ENCODE measurements at regions of chr2 and their contacts with region 1.

Region 1: DNA sequence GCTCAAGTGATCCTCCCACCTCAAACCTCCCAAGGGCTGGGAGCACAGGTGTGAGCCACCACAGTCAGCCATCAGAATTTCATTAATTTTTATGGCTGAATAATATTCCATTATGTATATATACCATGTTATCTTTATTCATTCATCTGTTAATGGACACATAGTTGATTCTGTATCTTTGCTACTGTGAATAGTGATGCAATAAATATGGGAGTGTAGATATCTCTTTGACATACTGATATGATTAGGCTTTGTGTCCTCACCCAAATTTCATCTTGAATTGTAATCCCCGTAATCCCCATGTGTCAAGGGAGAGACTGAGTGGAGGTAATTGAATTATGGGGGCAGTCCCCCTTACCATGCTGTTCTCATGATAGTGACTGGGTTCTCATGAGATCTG is 38.2 kb upstream of the REEP1 start:
- DNase-seq: no peak
- H3K4me3 ChIP-seq: no peak overlapping the region
- H3K27ac ChIP-seq: no peak overlapping the region
- H3K4me1 ChIP-seq: no peaks in the 10 kb centered on the region
- H3K27me3 ChIP-seq: no peaks in the 10 kb centered on the region
- CTCF ChIP-seq: no peak

Region 2: GRCh38 chr2:86453836-86454235 is 78.2 kb after region 1 on chr2:
- CTCF ChIA-PET with region 1: no interaction called
- POLR2A ChIA-PET with region 1: no interaction called
- intact Hi-C with region 1: loop called (anchors 5 kb)
- DNase-seq: peak; percentile 33 to 73
- H3K4me3 ChIP-seq: no peak overlapping the region
- H3K27ac ChIP-seq: no peak overlapping the region
- H3K4me1 ChIP-seq: peaks cover 17% of the 10 kb centered on the region; the same call in 1 of the 2 replicates
- H3K27me3 ChIP-seq: no peaks in the 10 kb centered on the region
- CTCF ChIP-seq: no peak

Measured in PC-9 (cell line).